CD4-positive, alpha-beta memory T cell (primary cell): ENCODE measurements at regions of chr1 and their contacts with region 1.

Region 1: DNA sequence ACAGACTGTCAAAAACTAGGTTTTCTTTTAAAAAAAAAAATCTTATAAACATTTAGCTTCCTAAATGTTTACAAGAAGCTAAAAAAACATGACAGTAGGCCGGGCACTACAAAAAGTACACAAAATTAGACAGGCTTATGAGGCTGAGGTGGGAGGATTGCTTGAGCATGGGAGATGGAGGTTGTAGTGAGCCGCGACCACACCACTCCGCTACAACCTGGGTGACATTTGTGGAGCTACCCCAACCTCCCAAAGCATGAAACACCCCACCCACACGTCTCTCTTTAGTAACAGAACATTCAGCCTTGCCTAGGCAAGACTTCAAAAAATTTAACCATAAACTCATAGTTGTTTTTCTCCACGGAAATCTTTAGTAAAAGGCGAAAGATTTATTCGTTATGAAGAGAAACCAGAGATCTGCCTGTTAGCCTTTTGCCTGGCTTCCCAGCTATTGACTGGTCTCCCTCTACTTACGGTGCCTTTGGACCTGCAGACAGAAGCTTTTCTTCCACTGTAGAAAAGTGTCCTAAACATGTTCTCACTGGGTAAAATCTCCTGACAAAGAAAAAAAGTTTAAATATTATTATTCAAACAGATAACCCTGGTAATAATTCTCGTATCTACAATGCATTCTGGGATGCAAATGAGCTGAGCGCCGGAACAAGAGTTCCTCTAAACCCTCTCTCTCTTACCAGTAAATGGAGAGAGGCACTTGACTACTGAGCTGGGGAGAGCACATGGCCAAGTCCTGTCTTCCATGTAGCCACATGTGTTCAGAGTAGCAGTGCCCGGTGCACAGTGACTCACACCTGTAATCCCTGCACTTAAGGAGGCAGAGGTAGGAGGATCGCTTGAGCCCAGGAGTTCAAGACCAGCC is 9.2 kb downstream of the RNU5D-1 start:
- DNase-seq: peak; percentile 77 to 85 (median 79)
- H3K4me3 ChIP-seq: no peak overlapping the region
- H3K4me3 Mint-ChIP-seq: peak overlapping the region; percentile 57 to 87 (median 80)
- H3K27ac ChIP-seq: peak overlapping the region; percentile 51
- H3K27ac Mint-ChIP-seq: peak overlapping the region; percentile 89 to 97 (median 94)
- H3K4me1 ChIP-seq: peaks cover 58% of the 10 kb centered on the region
- H3K4me1 Mint-ChIP-seq: peaks cover 50 to 74% (median 62%) of the 10 kb centered on the region in 4 donors
- H3K27me3 ChIP-seq: no peaks in the 10 kb centered on the region
- H3K27me3 Mint-ChIP-seq: no peaks in the 10 kb centered on the region

Region 2: DNA sequence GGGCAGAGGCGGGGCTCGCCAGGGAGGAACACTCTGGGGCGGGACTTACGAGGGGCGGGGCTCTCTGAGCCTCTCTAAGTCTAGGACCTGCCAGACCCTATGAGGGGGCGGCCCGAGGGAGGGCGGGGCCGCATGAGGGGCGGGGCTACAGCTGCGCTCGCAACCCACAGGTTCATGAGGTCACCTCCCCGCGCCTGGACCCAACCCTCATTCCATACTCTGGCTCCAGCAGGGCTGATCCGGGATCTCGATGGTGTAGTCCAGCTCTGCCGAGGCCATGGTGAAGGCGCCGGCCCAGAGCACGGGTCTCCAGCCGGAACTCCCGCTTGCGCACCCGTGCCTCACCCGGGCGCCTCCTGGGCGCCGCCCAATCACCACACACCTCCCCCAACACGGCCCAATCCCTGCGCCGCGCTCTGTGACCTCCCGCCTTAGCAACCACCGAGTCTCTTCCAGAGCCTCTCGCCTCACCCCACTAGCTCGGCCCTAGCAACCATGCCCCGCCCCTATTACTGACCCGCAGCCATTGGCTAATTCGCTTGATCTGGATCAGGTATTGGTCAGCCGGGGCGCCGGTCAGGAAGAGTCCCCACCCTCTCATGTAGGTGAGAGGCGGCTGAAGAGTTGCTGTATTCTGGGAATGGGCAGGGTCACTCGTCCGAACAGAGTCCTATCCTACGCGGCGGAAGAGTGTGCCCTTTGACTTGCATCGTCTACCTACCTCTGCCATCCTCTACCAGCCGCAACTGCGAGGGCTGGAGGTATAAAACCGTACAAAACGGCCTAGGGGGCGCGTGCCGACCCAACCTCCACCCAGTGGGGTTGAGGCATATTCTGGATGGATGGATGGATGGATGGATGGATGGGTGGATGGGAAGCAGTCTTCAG is 47.4 kb before region 1 on chr1 and contains the starts of genes ARMH1 and TMEM53:
- CTCF ChIA-PET with region 1: no interaction called
- POLR2A ChIA-PET with region 1: interaction called, 21 read pairs
- intact Hi-C with region 1: no loop called
- DNase-seq: peak; percentile 96 to 98 (median 97)
- H3K4me3 ChIP-seq: peak within 1 kb of the TSS; percentile 62 to 95
- H3K4me3 Mint-ChIP-seq: peak within 1 kb of the TSS; percentile 89 to 95 (median 90)
- H3K27ac ChIP-seq: peak within 1 kb of the TSS; percentile 74
- H3K27ac Mint-ChIP-seq: peak within 1 kb of the TSS; percentile 87 to 94 (median 93)
- H3K4me1 ChIP-seq: peaks cover 25% of the 10 kb centered on the region
- H3K4me1 Mint-ChIP-seq: peaks cover 11 to 31% (median 23%) of the 10 kb centered on the region in 4 donors
- H3K27me3 ChIP-seq: no peaks in the 10 kb centered on the region
- H3K27me3 Mint-ChIP-seq: no peaks in the 10 kb centered on the region
- total RNA-seq, gene ARMH1: 64.0 to 74.5 TPM
- total RNA-seq, gene TMEM53: 1.7 to 2.2 TPM

Region 3: DNA sequence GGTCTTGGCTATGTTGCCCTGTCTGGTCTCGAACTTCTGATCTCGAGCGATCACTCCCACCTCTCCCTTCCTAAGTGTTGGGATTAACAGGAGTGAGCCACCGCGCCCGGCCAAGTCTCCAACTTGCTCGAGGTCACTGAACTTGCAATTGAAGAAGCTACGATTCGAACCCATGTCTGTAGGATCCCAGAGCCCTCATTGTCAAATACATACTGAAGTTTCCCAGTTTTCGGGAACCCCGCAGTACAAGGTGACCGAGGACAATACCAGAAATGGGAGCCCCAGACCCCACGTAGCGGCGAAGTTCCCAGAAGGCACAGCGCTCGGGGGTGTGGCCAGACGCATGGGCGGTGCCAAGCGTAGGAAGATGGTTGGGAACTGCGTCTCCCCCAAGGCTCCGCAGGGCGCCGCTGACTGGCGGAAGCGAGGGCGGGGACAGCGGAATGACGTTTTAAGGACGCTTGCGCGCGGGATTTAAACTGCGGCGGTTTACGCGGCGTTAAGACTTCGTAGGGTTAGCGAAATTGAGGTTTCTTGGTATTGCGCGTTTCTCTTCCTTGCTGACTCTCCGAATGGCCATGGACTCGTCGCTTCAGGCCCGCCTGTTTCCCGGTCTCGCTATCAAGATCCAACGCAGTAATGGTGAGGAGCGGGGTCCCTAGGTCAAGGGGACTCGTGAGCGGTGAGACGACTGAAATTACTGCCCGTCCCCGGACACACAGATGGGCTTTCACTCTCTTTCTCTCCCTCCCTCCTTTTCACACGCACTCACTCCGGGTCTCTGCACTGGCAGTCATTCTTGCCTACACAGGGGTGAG is 17.8 kb after region 1 on chr1 and contains the start of gene KIF2C:
- CTCF ChIA-PET with region 1: interaction called, 175 read pairs
- POLR2A ChIA-PET with region 1: interaction called, 15 read pairs
- intact Hi-C with region 1: no loop called
- DNase-seq: peak; percentile 93 to 96 (median 95)
- H3K4me3 ChIP-seq: peak within 1 kb of the TSS; percentile 78 to 82
- H3K4me3 Mint-ChIP-seq: peak within 1 kb of the TSS; percentile 92 to 98 (median 95)
- H3K27ac ChIP-seq: peak within 1 kb of the TSS; percentile 79
- H3K27ac Mint-ChIP-seq: peak within 1 kb of the TSS; percentile 95 to 97 (median 96)
- H3K4me1 ChIP-seq: peaks cover 15% of the 10 kb centered on the region
- H3K4me1 Mint-ChIP-seq: peaks cover 5 to 26% (median 15%) of the 10 kb centered on the region in 4 donors
- H3K27me3 ChIP-seq: no peaks in the 10 kb centered on the region
- H3K27me3 Mint-ChIP-seq: no peaks in the 10 kb centered on the region
- total RNA-seq, gene KIF2C: 1.4 to 1.5 TPM

Region 4: GRCh38 chr1:44786138-44786840 is 64.6 kb after region 1 on chr1:
- CTCF ChIA-PET with region 1: interaction called, 75 read pairs
- POLR2A ChIA-PET with region 1: interaction called, 21 read pairs
- intact Hi-C with region 1: no loop called
- DNase-seq: peak; percentile 72 to 84 (median 80)
- H3K4me3 ChIP-seq: peak overlapping the region; percentile 52 to 68
- H3K4me3 Mint-ChIP-seq: peak overlapping the region; percentile 73 to 83 (median 80)
- H3K27ac ChIP-seq: peak overlapping the region; percentile 53
- H3K27ac Mint-ChIP-seq: peak overlapping the region; percentile 41 to 95 (median 88)
- H3K4me1 ChIP-seq: peaks cover 39% of the 10 kb centered on the region
- H3K4me1 Mint-ChIP-seq: peaks cover 22 to 37% (median 28%) of the 10 kb centered on the region in 4 donors
- H3K27me3 ChIP-seq: no peaks in the 10 kb centered on the region
- H3K27me3 Mint-ChIP-seq: no peaks in the 10 kb centered on the region

Region 5: DNA sequence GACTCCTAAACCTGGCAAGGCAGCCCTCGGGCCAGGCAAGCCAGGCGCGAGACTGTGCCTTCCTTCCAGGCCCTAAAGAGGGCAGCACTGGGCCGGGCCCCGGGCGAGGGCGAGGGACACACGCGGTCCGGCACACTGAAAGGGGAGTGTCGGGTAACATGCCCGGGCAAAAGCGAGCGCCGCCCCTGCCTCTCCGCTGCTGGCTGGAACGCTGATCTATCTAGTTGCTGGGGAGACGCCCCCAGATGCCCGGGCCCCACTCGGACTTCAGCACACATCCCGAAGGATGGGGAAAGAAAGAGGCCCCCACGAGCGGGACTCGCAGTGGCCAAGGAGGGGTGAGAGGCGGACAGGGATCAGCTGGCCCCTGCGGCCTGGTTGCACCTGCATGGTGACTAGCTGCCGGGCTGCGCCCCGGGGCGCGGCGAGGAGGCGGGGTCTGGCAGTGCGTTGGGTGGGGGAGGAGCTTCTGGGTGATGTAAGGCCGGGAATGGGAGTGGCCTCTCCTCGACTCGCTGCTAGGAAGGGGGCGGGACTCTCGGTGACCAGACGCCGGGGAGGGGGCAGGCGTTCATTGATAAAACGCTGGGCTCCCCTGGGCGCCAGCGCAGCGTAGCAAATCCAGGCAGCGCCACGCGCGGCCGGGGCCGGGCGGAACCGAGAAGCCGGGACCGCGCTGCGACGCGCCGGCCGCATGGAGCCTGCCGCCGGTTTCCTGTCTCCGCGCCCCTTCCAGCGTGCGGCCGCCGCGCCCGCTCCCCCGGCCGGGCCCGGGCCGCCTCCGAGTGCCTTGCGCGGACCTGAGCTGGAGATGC is 78.3 kb after region 1 on chr1 and contains the start of gene PLK3:
- CTCF ChIA-PET with region 1: interaction called, 4 read pairs
- POLR2A ChIA-PET with region 1: interaction called, 35 read pairs
- intact Hi-C with region 1: no loop called
- DNase-seq: peak; percentile 99 to 100 (median 99)
- H3K4me3 ChIP-seq: peak within 1 kb of the TSS; percentile 77 to 83
- H3K4me3 Mint-ChIP-seq: peak within 1 kb of the TSS; percentile 89 to 99 (median 96)
- H3K27ac ChIP-seq: peak within 1 kb of the TSS; percentile 96
- H3K27ac Mint-ChIP-seq: peak within 1 kb of the TSS; percentile 82 to 100 (median 99)
- H3K4me1 ChIP-seq: peaks cover 37% of the 10 kb centered on the region
- H3K4me1 Mint-ChIP-seq: peaks cover 23 to 48% (median 31%) of the 10 kb centered on the region in 4 donors
- H3K27me3 ChIP-seq: no peaks in the 10 kb centered on the region
- H3K27me3 Mint-ChIP-seq: no peaks in the 10 kb centered on the region
- total RNA-seq, gene PLK3: 151 to 153 TPM

Region 6: GRCh38 chr1:44819608-44820327 is 98.0 kb after region 1 on chr1:
- CTCF ChIA-PET with region 1: interaction called, 3 read pairs
- POLR2A ChIA-PET with region 1: interaction called, 103 read pairs
- intact Hi-C with region 1: no loop called
- DNase-seq: peak; percentile 83 to 90 (median 88)
- H3K4me3 ChIP-seq: peak overlapping the region; percentile 74 to 86
- H3K4me3 Mint-ChIP-seq: peak overlapping the region; percentile 91 to 96 (median 95)
- H3K27ac ChIP-seq: peak overlapping the region; percentile 88
- H3K27ac Mint-ChIP-seq: peak overlapping the region; percentile 100
- H3K4me1 ChIP-seq: peaks cover 33% of the 10 kb centered on the region
- H3K4me1 Mint-ChIP-seq: peaks cover 22 to 57% (median 35%) of the 10 kb centered on the region in 4 donors
- H3K27me3 ChIP-seq: no peaks in the 10 kb centered on the region
- H3K27me3 Mint-ChIP-seq: no peaks in the 10 kb centered on the region